CD14-positive monocyte (primary cell): ENCODE measurements at regions of chr11 and their contacts with region 1.

Region 1: GRCh38 chr11:269146-269890 is 8.9 kb upstream of the NLRP6 start:
- DNase-seq: peak; percentile 96 to 99 (median 97)
- H3K4me3 ChIP-seq: peak overlapping the region; percentile 47 to 77 (median 55)
- H3K4me3 Mint-ChIP-seq: peak overlapping the region; percentile 84 to 99
- H3K27ac ChIP-seq: peak overlapping the region; percentile 99 to 100
- H3K27ac Mint-ChIP-seq: peak overlapping the region; percentile 97 to 100 (median 99)
- H3K4me1 ChIP-seq: peaks cover 37% of the 10 kb centered on the region in 2 donors
- H3K4me1 Mint-ChIP-seq: peaks cover 35% of the 10 kb centered on the region
- H3K27me3 ChIP-seq: no peaks in the 10 kb centered on the region
- H3K27me3 Mint-ChIP-seq: peaks cover 0 to 9% (median 2%) of the 10 kb centered on the region in 3 donors
- CTCF ChIP-seq: peak; percentile 55

Region 2: DNA sequence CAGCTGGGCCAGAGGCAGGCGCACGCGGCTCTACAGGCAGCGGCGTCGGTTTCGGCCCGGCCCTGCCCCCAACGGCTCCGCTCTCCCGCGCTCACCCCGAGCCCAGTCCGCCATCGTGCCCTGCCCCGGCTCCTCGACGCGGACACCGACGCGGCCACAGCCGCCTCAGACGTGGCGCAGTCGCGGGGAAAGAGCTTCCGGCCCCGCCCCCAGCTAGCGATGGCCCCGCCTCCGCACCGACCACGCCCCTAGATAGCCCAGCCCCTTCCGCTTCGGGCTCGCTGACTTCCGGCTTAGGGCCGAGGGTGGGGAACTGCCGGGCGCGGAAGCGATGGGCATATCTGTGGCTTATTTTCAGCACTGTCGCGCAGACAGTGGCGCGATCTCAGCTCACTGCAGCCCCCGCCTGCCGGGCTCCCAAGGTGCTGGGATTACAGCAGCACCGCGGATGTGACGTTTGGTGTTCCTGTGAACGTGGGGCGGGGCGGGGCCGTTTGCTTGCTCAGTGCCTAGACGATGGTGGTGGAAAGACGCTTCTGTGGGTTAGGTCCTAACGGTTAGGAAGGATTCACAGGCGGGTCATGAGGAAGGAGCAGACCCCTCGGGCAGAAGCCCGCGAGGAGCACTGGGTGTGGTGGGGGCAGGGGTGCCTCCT is 62.0 kb before region 1 on chr11 and contains the starts of genes BET1L and RIC8A:
- intact Hi-C with region 1: loop called in 1 of 2 experiments (anchors 5 kb)
- DNase-seq: peak; percentile 98 to 99 (median 99)
- H3K4me3 ChIP-seq: peak within 1 kb of the TSS; percentile 78 to 98 (median 81)
- H3K4me3 Mint-ChIP-seq: peak within 1 kb of the TSS; percentile 97 to 98
- H3K27ac ChIP-seq: peak within 1 kb of the TSS; percentile 98 to 100
- H3K27ac Mint-ChIP-seq: peak within 1 kb of the TSS; percentile 99 to 100 (median 100)
- H3K4me1 ChIP-seq: peaks cover 39 to 59% of the 10 kb centered on the region in 2 donors
- H3K4me1 Mint-ChIP-seq: peaks cover 53% of the 10 kb centered on the region
- H3K27me3 ChIP-seq: no peaks in the 10 kb centered on the region
- H3K27me3 Mint-ChIP-seq: peaks cover 2 to 5% (median 4%) of the 10 kb centered on the region in 3 donors
- CTCF ChIP-seq: no peak
- polyA plus RNA-seq, gene BET1L: 9.5 to 37.3 (median 29.3) TPM
- polyA plus RNA-seq, gene RIC8A: 51.1 to 79.1 (median 56.5) TPM

Region 3: GRCh38 chr11:819129-819931 is 550.0 kb after region 1 on chr11:
- intact Hi-C with region 1: no loop called
- DNase-seq: peak; percentile 86 to 88 (median 87)
- H3K4me3 ChIP-seq: peak overlapping the region; percentile 71 to 97 (median 87)
- H3K4me3 Mint-ChIP-seq: peak overlapping the region; percentile 88 to 90
- H3K27ac ChIP-seq: peak overlapping the region; percentile 85 to 91
- H3K27ac Mint-ChIP-seq: peak overlapping the region; percentile 91 to 98 (median 97)
- H3K4me1 ChIP-seq: peaks cover 40 to 45% of the 10 kb centered on the region in 2 donors
- H3K4me1 Mint-ChIP-seq: peaks cover 30% of the 10 kb centered on the region
- H3K27me3 ChIP-seq: no peaks in the 10 kb centered on the region
- H3K27me3 Mint-ChIP-seq: peaks cover 0 to 10% (median 2%) of the 10 kb centered on the region in 3 donors
- CTCF ChIP-seq: peak; percentile 34